Breast epithelium (tissue), 4 donors: ENCODE measurements at regions of chr14 and their contacts with region 1.

Region 1: DNA sequence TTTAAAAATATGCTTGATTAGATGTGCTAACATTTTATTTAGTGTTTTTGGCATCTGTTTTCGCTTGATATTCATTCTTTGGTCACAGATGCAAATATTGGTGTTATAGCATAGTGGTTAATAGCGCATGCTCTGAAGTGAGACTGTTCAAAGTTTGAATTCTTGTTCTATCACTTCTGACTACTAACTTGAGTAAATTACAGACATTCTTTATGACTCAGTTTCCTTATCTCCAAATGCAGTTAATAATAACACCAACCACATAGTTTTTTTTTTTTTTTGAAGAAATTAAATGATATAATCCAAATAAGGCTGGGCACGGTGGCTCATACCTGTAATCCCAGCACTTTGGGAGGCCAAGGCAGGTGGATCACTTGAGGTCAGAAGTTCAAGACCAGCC is 81.0 kb downstream of the TMX1 start:
- DNase-seq: no peak
- H3K4me3 ChIP-seq: no peak overlapping the region
- H3K27ac ChIP-seq: no peak overlapping the region
- H3K4me1 ChIP-seq: no peaks in the 10 kb centered on the region
- H3K27me3 ChIP-seq: no peaks in the 10 kb centered on the region
- CTCF ChIP-seq: no peak
- POLR2A ChIP-seq: no peak

Region 2: GRCh38 chr14:51382506-51382905 is 61.5 kb after region 1 on chr14:
- intact Hi-C with region 1: loop called (anchors 2 kb)
- DNase-seq: peak in 1 of 2 donors; percentile 78
- H3K4me3 ChIP-seq: no peak overlapping the region
- H3K27ac ChIP-seq: peak overlapping the region; percentile 80 to 83
- H3K4me1 ChIP-seq: peaks cover 0 to 4% of the 10 kb centered on the region in 2 donors
- H3K27me3 ChIP-seq: no peaks in the 10 kb centered on the region
- CTCF ChIP-seq: no peak
- POLR2A ChIP-seq: no peak